ENCODE measurements at regions of chr5 and their contacts with region 1.

Region 1: GRCh38 chr5:131983244-131983771 is 28.1 kb downstream of the ACSL6 start:
- DNase-seq: peak in 2 of 3 donors; percentile 29 to 44
- H3K4me3 ChIP-seq: no peak overlapping the region
- H3K27ac ChIP-seq: no peak overlapping the region
- H3K4me1 ChIP-seq: no peaks in the 10 kb centered on the region
- H3K27me3 ChIP-seq: no peaks in the 10 kb centered on the region

Region 2: DNA sequence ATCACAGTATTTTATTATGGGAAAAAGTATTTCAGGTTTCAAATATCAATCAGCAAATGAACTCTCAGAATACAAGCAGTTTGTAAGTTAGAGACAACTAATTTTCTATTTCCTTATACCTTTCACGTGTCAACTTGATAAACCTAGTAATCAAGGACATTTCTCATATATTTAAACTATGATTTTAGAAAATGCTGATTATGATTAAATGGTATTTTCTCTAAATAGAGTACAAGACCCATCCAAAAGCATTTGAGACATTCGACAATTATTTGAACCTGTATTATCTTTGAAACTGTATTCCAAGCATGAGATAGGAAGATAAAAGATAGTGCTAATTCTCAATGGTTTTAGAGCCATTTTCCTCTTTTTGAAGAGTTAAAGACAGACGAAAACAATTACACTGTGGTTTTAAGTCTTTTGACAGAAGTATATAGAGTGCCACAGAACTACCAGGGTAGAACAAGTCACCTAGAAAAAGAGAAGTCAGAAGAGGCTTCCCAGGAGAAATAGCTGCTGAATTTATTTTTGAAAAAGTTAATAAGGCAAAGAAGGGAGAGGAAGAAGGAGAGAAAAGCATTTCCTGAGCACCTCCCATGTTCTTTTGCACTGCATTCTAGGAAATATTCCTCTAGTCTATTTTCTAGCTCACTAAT is 43.5 kb before region 1 on chr5:
- CTCF ChIA-PET with region 1: no interaction called
- POLR2A ChIA-PET with region 1: no interaction called
- DNase-seq: no peak
- H3K4me3 ChIP-seq: no peak overlapping the region
- H3K27ac ChIP-seq: no peak overlapping the region
- H3K4me1 ChIP-seq: peaks cover 0 to 7% (median 0%) of the 10 kb centered on the region in 4 experiments
- H3K27me3 ChIP-seq: no peaks in the 10 kb centered on the region

Region 3: DNA sequence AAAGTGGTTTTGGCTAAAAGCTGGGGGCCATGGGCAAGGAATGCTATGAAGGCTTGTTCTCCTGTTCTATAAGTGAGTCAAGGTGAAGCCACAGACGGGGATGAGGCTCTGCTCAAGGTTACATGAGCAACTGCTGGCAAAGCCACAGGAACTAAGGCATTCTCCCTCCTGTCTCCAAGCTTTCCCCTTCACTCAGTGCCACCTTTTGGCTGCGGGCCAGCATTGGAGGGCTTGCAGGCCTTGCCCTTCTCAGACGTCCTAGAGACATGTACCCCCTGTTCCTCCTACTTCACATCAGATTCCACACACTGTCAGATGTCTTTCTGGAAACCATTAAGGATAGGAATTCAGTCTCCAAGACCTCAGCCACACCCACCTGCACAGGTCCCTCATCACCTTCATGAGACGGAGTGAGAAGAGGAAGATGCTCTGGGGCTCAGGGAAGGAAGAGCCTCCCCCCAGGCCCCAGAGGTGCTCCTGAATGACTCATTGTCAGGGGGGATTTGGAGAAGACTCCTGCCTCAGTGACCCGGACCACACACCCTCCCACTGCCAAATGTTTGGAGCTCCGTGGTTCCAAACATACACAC is 17.4 kb before region 1 on chr5:
- CTCF ChIA-PET with region 1: no interaction called
- POLR2A ChIA-PET with region 1: no interaction called
- DNase-seq: no peak
- H3K4me3 ChIP-seq: no peak overlapping the region
- H3K27ac ChIP-seq: no peak overlapping the region
- H3K4me1 ChIP-seq: no peaks in the 10 kb centered on the region
- H3K27me3 ChIP-seq: peaks cover 0 to 1% (median 0%) of the 10 kb centered on the region in 5 experiments

Region 4: GRCh38 chr5:131996207-131997025 is 13.1 kb after region 1 on chr5:
- CTCF ChIA-PET with region 1: interaction called, 11 read pairs
- POLR2A ChIA-PET with region 1: interaction called, 3 read pairs
- DNase-seq: peak; percentile 81 to 93 (median 91)
- H3K4me3 ChIP-seq: no peak overlapping the region
- H3K27ac ChIP-seq: no peak overlapping the region
- H3K4me1 ChIP-seq: peaks cover 7 to 56% (median 46%) of the 10 kb centered on the region in 4 experiments
- H3K27me3 ChIP-seq: peaks cover 0 to 3% (median 0%) of the 10 kb centered on the region in 5 experiments

Region 5: GRCh38 chr5:132114150-132115121 is 131.1 kb after region 1 on chr5:
- CTCF ChIA-PET with region 1: no interaction called
- POLR2A ChIA-PET with region 1: no interaction called
- DNase-seq: peak; percentile 88 to 98 (median 96)
- H3K4me3 ChIP-seq: peak overlapping the region in 1 of 7 experiments; percentile 25
- H3K27ac ChIP-seq: no peak overlapping the region
- H3K4me1 ChIP-seq: peaks cover 15 to 46% (median 34%) of the 10 kb centered on the region in 4 experiments
- H3K27me3 ChIP-seq: no peaks in the 10 kb centered on the region

Measured in common myeloid progenitor, CD34-positive (primary cell).